Activated CD4-positive, alpha-beta T cell treated with anti-CD3 and anti-CD28 coated beads for 36 hours (primary cell): ENCODE measurements at regions of chr16 and their contacts with region 1.

Region 1: GRCh38 chr16:71537643-71538042 is 11.4 kb downstream of the CHST4 start:
- DNase-seq: peak; percentile 71
- ATAC-seq: peak; percentile 58
- H3K4me3 Mint-ChIP-seq: no peak overlapping the region
- H3K27ac Mint-ChIP-seq: no peak overlapping the region
- H3K4me1 Mint-ChIP-seq: peaks cover 2% of the 10 kb centered on the region
- H3K27me3 Mint-ChIP-seq: peaks cover 6% of the 10 kb centered on the region

Region 2: DNA sequence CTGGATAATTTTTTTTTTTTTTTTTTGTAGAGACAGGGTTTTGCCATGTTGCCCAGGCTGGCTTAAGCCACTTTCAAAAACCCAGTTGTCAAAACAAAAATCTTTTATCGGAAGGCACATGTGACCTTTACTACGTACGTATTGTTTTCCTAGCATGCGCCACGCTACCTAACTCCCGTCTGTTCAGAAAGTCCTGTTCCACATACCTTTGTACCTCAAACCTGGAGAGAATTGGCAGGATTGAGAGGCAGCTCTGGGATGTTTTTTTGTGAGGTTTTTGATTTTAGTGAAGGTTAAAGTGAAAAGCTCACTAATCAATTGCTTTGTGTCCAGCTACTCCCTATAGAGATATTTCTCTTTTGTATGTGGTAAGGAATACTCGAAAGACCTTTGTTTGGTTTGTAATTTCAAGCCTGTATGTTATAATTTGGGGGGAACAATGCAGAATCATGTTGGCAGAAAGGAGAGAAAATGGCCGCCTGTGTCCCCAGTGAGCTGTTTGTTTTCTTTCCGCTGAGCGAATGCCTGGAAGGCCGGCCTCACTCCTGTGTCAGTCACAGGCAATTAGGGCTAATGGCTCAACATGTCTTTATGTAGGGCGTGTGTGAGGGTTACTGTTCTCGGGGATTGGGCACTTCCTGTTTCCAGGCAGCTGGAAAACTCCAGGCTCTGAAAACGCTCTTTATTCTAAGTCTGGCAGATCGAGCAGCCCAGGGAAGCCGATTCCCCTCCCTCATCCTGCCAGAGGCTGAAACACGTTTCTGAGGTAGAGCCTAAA is 1647.3 kb before region 1 on chr16:
- CTCF ChIA-PET with region 1: no interaction called
- POLR2A ChIA-PET with region 1: no interaction called
- intact Hi-C with region 1: no loop called
- DNase-seq: no peak
- ATAC-seq: no peak
- H3K4me3 Mint-ChIP-seq: no peak overlapping the region
- H3K27ac Mint-ChIP-seq: no peak overlapping the region
- H3K4me1 Mint-ChIP-seq: peaks cover 8% of the 10 kb centered on the region
- H3K27me3 Mint-ChIP-seq: no peaks in the 10 kb centered on the region

Region 3: GRCh38 chr16:71412270-71413160 is 125.1 kb before region 1 on chr16:
- CTCF ChIA-PET with region 1: interaction called, 11 read pairs
- POLR2A ChIA-PET with region 1: no interaction called
- intact Hi-C with region 1: loop called (anchors 2 to 5 kb)
- DNase-seq: peak; percentile 82
- ATAC-seq: peak; percentile 85
- H3K4me3 Mint-ChIP-seq: no peak overlapping the region
- H3K27ac Mint-ChIP-seq: no peak overlapping the region
- H3K4me1 Mint-ChIP-seq: no peaks in the 10 kb centered on the region
- H3K27me3 Mint-ChIP-seq: peaks cover 32% of the 10 kb centered on the region

Region 4: DNA sequence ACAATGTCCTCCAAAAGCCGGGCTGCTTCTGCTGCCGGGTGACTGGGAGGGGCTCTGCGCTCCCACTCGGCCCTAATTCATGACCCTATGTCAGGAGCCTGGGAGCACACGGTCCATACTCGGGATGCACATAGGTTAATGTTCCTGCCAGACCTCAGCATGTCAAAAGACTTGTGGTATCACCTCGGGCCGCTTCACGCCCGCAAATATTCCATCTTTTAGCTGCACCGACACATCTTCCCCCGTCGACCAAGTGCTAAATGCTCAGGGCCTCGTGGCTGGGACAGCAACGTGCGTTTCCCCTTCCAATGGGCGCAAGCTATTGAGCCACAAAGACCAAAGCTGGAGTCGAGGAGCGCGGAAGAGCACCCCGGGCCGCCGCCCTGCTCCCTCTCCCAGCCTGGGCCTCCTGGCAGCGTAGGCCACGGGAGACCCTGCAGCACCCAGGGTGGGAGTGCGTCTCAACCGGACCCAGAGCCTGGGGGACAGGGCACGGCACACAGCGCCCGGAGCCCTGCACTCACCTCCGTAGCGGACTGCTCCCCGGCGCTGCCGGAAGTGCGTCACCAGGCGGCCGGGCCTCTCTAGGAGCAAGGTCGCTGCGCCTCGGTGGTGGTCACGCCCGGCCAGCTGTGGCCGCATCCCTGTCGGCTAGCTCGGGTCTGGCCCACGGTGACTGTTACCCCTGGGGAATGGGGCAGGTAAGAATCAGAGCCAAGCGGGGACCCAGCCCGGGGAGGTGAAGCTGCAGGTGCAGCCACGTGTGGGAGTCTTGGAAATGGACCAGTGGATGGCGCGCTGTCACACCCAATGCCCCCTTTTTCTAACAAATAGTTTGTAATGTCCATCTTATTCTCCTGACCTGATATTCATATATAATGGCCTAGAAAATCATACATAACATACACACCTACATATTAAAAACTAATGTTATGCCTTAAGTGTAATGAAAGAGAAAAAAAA is 75.7 kb before region 1 on chr16 and contains the start of gene ZNF23:
- CTCF ChIA-PET with region 1: no interaction called
- POLR2A ChIA-PET with region 1: no interaction called
- intact Hi-C with region 1: loop called in 1 of 2 experiments (anchors 5 kb)
- DNase-seq: peak; percentile 88
- ATAC-seq: peak; percentile 96
- H3K4me3 Mint-ChIP-seq: peak within 1 kb of the TSS; percentile 76
- H3K27ac Mint-ChIP-seq: peak within 1 kb of the TSS; percentile 96
- H3K4me1 Mint-ChIP-seq: peaks cover 19% of the 10 kb centered on the region
- H3K27me3 Mint-ChIP-seq: no peaks in the 10 kb centered on the region
- total RNA-seq, gene ZNF23: 9.6 to 10.9 TPM

Region 5: DNA sequence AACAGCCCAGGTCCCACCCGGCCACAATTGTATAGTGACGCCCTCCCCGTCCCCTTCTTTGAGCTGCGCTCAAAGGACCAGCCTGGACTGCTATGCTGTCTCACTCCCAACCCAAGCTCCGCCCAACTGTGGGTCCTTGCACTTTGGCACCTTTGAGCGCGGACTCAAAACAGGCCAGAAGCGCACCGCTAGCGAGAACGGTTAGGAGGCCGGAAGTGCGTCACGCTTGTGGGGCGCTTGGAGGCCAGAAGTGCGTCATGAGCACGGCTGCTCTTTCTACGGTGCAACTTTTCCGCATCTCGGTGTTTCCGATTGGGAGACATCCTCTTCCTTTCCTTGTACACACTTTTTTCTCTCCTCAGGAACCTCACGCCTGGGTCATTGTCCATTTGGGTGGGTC is 48.5 kb before region 1 on chr16 and contains the start of gene ZNF19:
- CTCF ChIA-PET with region 1: no interaction called
- POLR2A ChIA-PET with region 1: no interaction called
- intact Hi-C with region 1: no loop called
- DNase-seq: no peak
- ATAC-seq: no peak
- H3K4me3 Mint-ChIP-seq: no peak within 1 kb of the TSS
- H3K27ac Mint-ChIP-seq: no peak within 1 kb of the TSS
- H3K4me1 Mint-ChIP-seq: peaks cover 6% of the 10 kb centered on the region
- H3K27me3 Mint-ChIP-seq: peaks cover 3% of the 10 kb centered on the region
- total RNA-seq, gene ZNF19: 2.9 TPM

Region 6: DNA sequence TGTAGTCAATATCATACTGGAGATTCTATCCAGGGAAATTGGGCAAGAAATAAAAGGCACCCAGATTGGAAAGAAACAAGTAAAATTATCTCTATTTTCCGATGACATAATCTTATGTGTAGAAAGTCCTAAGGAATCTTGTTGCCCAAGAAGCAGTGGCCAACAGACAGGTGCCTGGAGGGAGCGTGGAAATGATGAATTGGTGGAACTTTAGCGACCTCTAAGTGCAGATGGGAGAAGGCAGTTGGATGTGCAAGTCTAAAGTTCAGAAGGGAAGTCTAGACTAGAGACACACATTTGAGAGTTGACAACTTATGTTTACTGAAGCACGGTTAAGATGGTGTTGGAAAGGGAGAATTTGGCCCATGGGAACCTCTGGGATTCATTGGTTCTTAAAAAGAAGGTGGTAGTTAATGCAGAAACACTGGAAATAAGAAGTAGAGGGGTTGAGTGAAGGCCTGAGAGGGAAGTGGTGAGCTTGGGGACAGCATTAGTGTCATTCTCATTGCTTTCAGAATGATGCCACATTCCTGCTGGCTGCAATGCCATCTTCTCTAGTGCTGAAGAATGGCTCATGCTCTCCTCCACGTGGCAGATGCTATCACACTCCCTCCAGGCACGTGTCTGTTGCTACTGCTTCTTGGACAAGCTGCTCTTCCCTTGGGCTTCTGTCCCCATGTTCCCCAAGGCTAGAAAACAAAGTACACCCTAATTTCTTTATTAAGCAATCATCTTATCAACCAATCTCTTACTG is 15.2 kb after region 1 on chr16:
- CTCF ChIA-PET with region 1: interaction called, 10 read pairs
- POLR2A ChIA-PET with region 1: no interaction called
- intact Hi-C with region 1: no loop called
- DNase-seq: no peak
- ATAC-seq: no peak
- H3K4me3 Mint-ChIP-seq: no peak overlapping the region
- H3K27ac Mint-ChIP-seq: no peak overlapping the region
- H3K4me1 Mint-ChIP-seq: no peaks in the 10 kb centered on the region
- H3K27me3 Mint-ChIP-seq: peaks cover 4% of the 10 kb centered on the region